ENCODE measurements at regions of chr6 and their contacts with region 1.

Region 1: DNA sequence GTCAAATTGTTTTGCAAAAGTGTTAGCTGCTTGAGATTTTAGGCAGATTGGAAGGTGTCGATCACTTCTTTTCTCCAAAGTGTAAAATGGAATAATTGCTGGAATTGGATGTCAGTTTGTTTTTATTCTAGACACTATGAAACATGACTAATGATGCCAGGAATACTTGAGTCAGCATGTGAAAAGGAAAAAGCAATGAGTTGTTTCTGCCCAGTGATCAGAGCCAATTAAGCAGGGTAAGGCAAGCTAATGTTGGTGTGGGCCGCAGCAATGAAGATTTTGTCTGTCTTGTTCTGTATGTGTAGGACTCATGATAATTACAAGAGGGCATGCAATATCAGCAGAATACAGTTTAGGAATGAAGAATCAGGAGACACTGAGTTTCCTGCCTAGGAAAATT is 110.3 kb downstream of the CARMIL1 start:
- DNase-seq: no peak

Region 2: DNA sequence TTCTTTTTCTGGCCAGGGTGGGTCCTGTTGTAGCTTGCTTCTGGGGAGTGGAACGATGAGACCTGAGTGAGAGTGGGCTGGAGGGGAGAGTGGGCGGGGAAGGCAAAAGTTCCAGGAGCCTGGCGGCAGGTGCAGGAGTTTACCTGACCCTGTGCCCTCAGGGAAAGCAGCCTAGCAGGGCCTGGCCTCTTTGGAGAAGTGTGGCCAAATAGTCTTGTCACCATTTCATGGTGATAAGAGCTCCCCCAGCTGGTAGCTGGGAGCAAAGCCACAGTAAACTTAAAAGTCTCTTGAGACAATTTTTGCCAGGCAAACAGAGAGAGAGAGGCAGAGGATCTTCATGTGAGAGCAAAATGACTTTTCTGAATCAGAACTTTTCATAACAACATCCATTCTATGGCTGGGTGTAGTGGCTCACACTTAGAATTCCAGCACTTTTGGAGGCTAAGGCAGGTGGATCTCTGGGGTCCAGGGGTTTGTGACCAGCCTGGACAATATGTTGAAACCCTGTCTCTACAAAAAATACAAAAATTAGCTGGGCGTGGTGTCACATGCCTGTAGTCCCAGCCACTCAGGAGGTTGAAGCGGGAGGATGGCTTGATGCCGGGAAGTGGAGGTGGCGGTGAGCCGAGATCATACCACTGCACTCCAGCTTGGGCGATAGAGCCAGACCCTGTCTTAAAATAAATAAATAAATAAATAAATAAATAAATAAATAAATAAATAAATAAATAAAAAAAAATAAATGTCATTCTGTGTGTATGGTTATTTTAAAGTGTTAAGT is 100.7 kb after region 1 on chr6:
- intact Hi-C with region 1: loop called (anchors 5 kb)
- DNase-seq: peak; percentile 83

Measured in cardiac septum (tissue), 1 donor.